ENCODE measurements at regions of chr4 and their contacts with region 1.

Region 1: GRCh38 chr4:40908702-40909362 is 159.1 kb downstream of the NSUN7 start:
- DNase-seq: peak; percentile 82
- ATAC-seq: peak; percentile 77
- H3K4me3 Mint-ChIP-seq: no peak overlapping the region
- H3K27ac Mint-ChIP-seq: peak overlapping the region; percentile 93
- H3K4me1 Mint-ChIP-seq: peaks cover 31% of the 10 kb centered on the region
- H3K27me3 Mint-ChIP-seq: no peaks in the 10 kb centered on the region
- CTCF ChIP-seq: peak; percentile 90

Region 2: DNA sequence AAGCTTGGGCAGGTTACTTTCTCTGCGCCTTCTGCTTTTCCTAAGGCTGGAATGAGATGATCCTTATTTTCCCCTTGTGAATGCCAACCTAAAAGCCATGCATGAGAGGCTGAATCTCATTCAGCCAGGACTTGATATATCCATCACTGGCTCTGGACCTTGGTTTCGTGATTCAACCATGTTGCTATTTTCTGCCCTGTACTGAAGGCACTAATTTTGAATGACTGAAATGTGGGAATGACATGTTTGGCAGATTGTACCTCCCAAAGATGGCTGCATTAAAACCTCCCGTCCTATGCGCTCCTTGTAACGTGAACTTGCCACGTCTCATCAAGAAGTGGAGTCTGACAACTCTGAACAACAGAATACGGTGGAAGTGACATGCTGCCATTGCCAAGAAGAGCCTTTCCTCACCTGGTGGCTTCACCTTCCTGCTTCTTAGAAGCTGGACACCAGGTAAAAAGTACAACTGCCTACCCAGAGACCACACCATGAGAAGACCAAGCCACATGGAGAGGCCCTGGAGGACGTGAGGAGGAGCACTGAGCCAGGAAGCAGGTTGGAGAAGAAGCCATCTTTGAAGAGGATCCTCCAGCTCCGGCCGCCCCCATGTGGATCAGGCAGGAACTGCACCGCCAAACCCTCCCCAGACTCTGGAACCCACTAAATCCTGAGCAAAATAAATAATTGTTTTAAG is 15.4 kb after region 1 on chr4:
- CTCF ChIA-PET with region 1: interaction called, 148 read pairs
- POLR2A ChIA-PET with region 1: interaction called, 3 read pairs
- intact Hi-C with region 1: no loop called
- DNase-seq: peak; percentile 90
- ATAC-seq: peak; percentile 93
- H3K4me3 Mint-ChIP-seq: no peak overlapping the region
- H3K27ac Mint-ChIP-seq: peak overlapping the region; percentile 92
- H3K4me1 Mint-ChIP-seq: peaks cover 9% of the 10 kb centered on the region
- H3K27me3 Mint-ChIP-seq: peaks cover 21% of the 10 kb centered on the region
- CTCF ChIP-seq: peak; percentile 91

Region 3: GRCh38 chr4:40953283-40954087 is 44.7 kb after region 1 on chr4:
- CTCF ChIA-PET with region 1: no interaction called
- POLR2A ChIA-PET with region 1: no interaction called
- intact Hi-C with region 1: no loop called
- DNase-seq: no peak
- ATAC-seq: no peak
- H3K4me3 Mint-ChIP-seq: no peak overlapping the region
- H3K27ac Mint-ChIP-seq: no peak overlapping the region
- H3K4me1 Mint-ChIP-seq: no peaks in the 10 kb centered on the region
- H3K27me3 Mint-ChIP-seq: no peaks in the 10 kb centered on the region
- CTCF ChIP-seq: no peak

Region 4: GRCh38 chr4:41268022-41268421 is 359.2 kb after region 1 on chr4:
- CTCF ChIA-PET with region 1: no interaction called
- POLR2A ChIA-PET with region 1: no interaction called
- intact Hi-C with region 1: no loop called
- DNase-seq: no peak
- ATAC-seq: no peak
- H3K4me3 Mint-ChIP-seq: no peak overlapping the region
- H3K27ac Mint-ChIP-seq: no peak overlapping the region
- H3K4me1 Mint-ChIP-seq: no peaks in the 10 kb centered on the region
- H3K27me3 Mint-ChIP-seq: peaks cover 5% of the 10 kb centered on the region
- CTCF ChIP-seq: no peak

Measured in activated CD8-positive, alpha-beta T cell treated with anti-CD3 and anti-CD28 coated beads for 36 hours (primary cell).